Head of caudate nucleus (tissue), 42 donors: ENCODE measurements at regions of chr16 and their contacts with region 1.

Region 1: GRCh38 chr16:73878611-73879010 is 418.0 kb upstream of the PSMD7 start:
- DNase-seq: peak in 14 of 42 donors; percentile 17 to 79 (median 35)

Region 2: GRCh38 chr16:73565262-73565661 is 313.3 kb before region 1 on chr16:
- intact Hi-C with region 1: loop called (anchors 10 kb)
- DNase-seq: peak in 1 of 42 donors; percentile 32

Region 3: DNA sequence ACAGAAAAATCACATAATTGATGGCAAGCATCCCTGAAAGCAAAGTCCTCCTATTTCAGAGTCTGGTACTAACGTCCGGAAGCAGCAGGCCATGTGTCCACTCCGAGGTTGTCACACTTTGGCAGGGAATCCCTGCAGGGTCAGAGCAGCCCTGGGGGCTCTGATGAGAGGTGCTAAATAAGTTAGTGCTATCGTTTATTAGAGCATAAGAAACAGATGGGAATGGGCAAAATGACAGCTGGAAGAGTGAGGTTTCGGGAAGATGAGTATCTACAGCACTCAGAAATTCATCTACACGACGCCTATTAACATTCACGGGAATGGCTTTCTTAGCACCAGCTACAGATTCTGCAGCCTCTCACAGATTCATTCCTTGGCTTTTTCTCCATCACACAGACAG is 47.4 kb before region 1 on chr16:
- intact Hi-C with region 1: no loop called
- DNase-seq: no peak